Activated CD8-positive, alpha-beta T cell treated with anti-CD3 and anti-CD28 coated beads for 36 hours (primary cell): ENCODE measurements at regions of chr11 and their contacts with region 1.

Region 1: DNA sequence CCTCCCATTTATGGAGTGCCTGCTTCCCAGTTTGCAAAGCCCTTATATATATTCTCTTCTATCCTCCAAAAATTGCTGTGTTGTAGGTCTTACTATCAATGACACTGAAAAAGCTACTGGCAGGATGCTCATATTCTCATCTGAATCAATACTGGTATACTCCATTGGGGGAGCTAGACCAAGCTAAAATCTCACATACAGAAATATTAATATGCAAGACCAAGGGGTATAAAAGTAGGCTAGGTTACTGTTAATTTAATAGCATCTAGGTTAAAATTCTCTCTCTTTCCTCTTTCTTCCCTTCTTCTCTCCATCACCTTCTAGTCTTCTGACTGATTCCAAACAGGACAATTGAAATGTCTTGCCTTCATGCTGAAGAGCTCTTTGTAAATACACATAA is 17.1 kb upstream of the BDNF start:
- DNase-seq: no peak
- ATAC-seq: no peak
- H3K4me3 Mint-ChIP-seq: no peak overlapping the region
- H3K27ac Mint-ChIP-seq: no peak overlapping the region
- H3K4me1 Mint-ChIP-seq: peaks cover 12% of the 10 kb centered on the region
- H3K27me3 Mint-ChIP-seq: peaks cover 52% of the 10 kb centered on the region
- CTCF ChIP-seq: no peak

Region 2: GRCh38 chr11:27705873-27706820 is 11.2 kb before region 1 on chr11:
- CTCF ChIA-PET with region 1: interaction called, 28 read pairs
- POLR2A ChIA-PET with region 1: no interaction called
- intact Hi-C with region 1: no loop called
- DNase-seq: no peak
- ATAC-seq: peak; percentile 62
- H3K4me3 Mint-ChIP-seq: no peak overlapping the region
- H3K27ac Mint-ChIP-seq: no peak overlapping the region
- H3K4me1 Mint-ChIP-seq: peaks cover 6% of the 10 kb centered on the region
- H3K27me3 Mint-ChIP-seq: peaks cover 24% of the 10 kb centered on the region
- CTCF ChIP-seq: peak; percentile 62